ENCODE measurements at regions of chr1 and their contacts with region 1.

Region 1: GRCh38 chr1:91885716-91886506 is at the start of gene TGFBR3:
- DNase-seq: peak; percentile 76 to 87
- ATAC-seq: peak; percentile 86 to 87
- H3K4me3 ChIP-seq: peak within 1 kb of the TSS; percentile 84
- H3K27ac ChIP-seq: peak within 1 kb of the TSS; percentile 77 to 92
- H3K4me1 ChIP-seq: peaks cover 39% of the 10 kb centered on the region
- CTCF ChIP-seq: no peak; the same call in 2 of the 3 replicates
- EP300 ChIP-seq: peak in 1 of 2 experiments; percentile 22; a peak in 1 of 5 replicates
- POLR2A ChIP-seq: peak; percentile 46; the same call in 1 of the 2 replicates
- RAD21 ChIP-seq: peak; percentile 5 to 45; a peak in 2 of 5 replicates
- polyA plus RNA-seq, gene TGFBR3: 8.9 and 12.1 TPM in 2 replicates

Region 2: GRCh38 chr1:91529856-91530255 is 356.1 kb before region 1 on chr1:
- CTCF ChIA-PET with region 1: interaction called, 13 read pairs
- POLR2A ChIA-PET with region 1: no interaction called
- DNase-seq: peak in 1 of 2 experiments; percentile 44
- ATAC-seq: peak in 1 of 2 experiments; percentile 66; a peak in 3 of 6 replicates
- H3K4me3 ChIP-seq: no peak overlapping the region
- H3K27ac ChIP-seq: peak overlapping the region; percentile 59 to 80
- H3K4me1 ChIP-seq: 0 out of 3 replicates have a peak, but pooled peaks cover 6% of the 10 kb centered on the region
- CTCF ChIP-seq: peak; percentile 62
- EP300 ChIP-seq: no peak
- POLR2A ChIP-seq: no peak
- RAD21 ChIP-seq: peak; percentile 77

Region 3: DNA sequence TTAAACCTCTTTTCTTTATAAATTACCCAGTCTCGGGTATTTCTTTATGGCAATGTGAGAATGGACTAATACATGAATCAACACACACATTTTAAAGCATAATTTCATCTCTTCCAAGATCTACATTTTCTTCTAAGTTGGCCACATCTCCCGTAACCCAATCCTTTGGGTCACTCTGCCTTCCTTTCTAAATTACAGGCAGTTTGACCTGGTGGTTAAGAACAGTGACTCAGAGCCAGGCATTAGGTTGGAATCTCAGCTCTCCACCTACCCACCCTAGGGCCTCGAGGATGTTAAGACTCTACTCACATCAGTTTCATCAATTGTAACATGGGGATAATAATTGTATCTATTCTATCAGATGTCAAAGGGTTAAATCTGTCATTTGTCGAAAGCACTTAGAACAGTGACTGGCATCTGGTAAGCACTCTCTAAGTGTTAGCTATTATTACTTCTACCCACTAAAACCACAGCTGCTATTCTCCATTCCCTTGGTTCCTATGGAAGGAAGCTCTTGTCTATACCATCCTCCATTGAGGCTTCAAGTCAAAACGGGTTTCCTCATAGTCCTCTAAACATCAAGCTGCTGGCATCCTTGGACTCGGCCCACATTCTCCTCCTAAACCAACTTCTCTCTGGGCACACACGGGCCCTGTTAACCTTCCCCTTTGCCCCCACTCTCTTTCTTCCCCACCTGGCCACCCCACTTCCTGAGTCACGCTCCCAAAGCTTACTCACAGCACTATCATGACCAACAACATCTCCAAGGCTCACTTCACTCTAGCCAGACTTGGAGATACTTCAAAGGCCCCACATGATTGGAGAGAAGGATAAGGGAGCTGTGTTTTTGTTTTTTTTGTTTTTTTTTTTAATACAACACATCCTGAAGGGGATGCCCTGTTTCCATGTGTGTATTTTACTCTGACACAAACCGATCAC is 116.9 kb before region 1 on chr1:
- CTCF ChIA-PET with region 1: no interaction called
- POLR2A ChIA-PET with region 1: no interaction called
- DNase-seq: no peak
- ATAC-seq: no peak
- H3K4me3 ChIP-seq: no peak overlapping the region
- H3K27ac ChIP-seq: no peak overlapping the region
- H3K4me1 ChIP-seq: peaks cover 4% of the 10 kb centered on the region; the same call in 2 of the 3 replicates
- CTCF ChIP-seq: no peak
- EP300 ChIP-seq: no peak
- POLR2A ChIP-seq: no peak
- RAD21 ChIP-seq: no peak

Region 4: DNA sequence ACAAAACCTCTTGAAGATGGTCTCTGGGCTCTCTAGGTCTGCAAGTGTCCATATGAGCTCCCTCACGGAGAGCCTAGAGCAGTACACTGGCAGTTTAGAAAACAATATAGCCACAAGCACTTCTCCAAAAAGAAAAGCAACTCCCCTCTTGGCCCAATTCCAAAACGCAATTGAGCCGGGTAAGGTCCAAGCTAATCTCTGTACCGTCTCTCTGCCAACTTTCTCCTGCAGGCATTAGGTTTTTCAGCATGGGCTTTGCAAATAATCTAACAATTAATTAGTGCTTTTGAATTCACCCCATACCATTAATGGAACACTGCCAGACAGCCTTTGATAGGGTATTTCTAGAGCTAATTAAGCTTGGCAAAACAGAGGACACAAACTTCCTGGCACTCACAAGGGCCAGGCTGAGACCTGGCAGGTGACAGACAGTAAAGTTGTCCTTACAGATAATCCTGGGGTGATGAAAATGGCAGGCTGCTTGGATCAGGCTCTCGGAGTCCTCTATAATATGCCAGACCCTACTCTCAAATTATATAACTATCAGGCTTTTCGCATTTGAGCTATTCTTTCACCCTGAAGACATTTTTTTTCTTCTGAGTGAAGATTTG is 39.8 kb before region 1 on chr1:
- CTCF ChIA-PET with region 1: interaction called, 8 read pairs
- POLR2A ChIA-PET with region 1: interaction called, 10 read pairs
- DNase-seq: peak in 1 of 2 experiments; percentile 18
- ATAC-seq: peak; percentile 23 to 46; a peak in 2 of 6 replicates
- H3K4me3 ChIP-seq: no peak overlapping the region
- H3K27ac ChIP-seq: peak overlapping the region; percentile 71 to 75
- H3K4me1 ChIP-seq: peaks cover 54% of the 10 kb centered on the region
- CTCF ChIP-seq: no peak
- EP300 ChIP-seq: no peak
- POLR2A ChIP-seq: no peak
- RAD21 ChIP-seq: no peak

Region 5: DNA sequence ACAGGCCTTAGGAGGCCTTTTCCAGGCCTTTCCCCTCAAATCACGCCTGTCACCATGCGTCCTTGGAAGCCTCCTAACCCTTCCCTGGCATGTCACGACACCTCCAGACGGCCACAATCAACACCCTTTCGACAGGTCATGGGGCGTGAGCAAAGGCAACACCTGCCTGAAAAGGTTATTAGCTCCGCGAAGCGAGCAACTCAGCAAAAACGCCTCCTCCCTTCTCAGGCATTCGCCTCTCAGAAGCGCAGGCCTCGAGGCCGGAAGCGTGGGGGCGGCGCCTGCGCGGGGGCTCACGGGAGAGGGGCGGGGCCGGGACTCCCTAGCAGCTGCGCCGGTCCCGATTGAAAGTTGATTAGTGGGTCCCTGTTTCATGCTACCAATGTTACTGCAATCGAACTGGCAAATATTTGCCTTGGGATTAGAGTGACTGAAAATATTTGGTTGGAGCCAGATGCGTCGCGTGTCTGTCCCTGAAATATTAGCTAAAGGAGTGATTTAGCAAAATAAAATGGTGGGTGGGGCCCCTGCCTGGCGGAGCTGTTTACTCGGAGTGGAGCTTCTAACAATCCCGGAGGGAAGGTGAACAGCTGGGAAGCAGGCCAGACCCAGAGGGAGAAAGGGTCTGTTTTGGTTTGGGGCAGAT is 555.9 kb after region 1 on chr1:
- CTCF ChIA-PET with region 1: no interaction called
- POLR2A ChIA-PET with region 1: no interaction called
- DNase-seq: peak; percentile 20 to 60
- ATAC-seq: peak; percentile 83 to 88; a peak in 5 of 6 replicates
- H3K4me3 ChIP-seq: peak overlapping the region; percentile 39
- H3K27ac ChIP-seq: peak overlapping the region; percentile 57 to 75; a peak in 5 of 6 replicates
- H3K4me1 ChIP-seq: peaks cover 2% of the 10 kb centered on the region; the same call in 1 of the 3 replicates
- CTCF ChIP-seq: no peak
- EP300 ChIP-seq: no peak
- POLR2A ChIP-seq: no peak
- RAD21 ChIP-seq: no peak

Measured in A549 (cell line).